ENCODE measurements at regions of chr17 and their contacts with region 1.

Region 1: GRCh38 chr17:81833160-81833920 is at the start of gene MCRIP1:
- DNase-seq: peak; percentile 91
- ATAC-seq: peak; percentile 89
- H3K4me3 ChIP-seq: peak within 1 kb of the TSS; percentile 87 to 98
- H3K27ac ChIP-seq: peak within 1 kb of the TSS; percentile 93
- H3K4me1 ChIP-seq: peaks cover 17 to 32% of the 10 kb centered on the region in 2 experiments
- H3K27me3 ChIP-seq: no peaks in the 10 kb centered on the region
- CTCF ChIP-seq: no peak
- POLR2A ChIP-seq: peak; percentile 88
- RAD21 ChIP-seq: no peak
- total RNA-seq, gene MCRIP1: 59.2 TPM

Region 2: GRCh38 chr17:81821603-81822311 is 11.6 kb before region 1 on chr17:
- CTCF ChIA-PET with region 1: interaction called, 10 read pairs
- POLR2A ChIA-PET with region 1: interaction called, 8 read pairs
- RAD21 ChIA-PET with region 1: no interaction called
- intact Hi-C with region 1: no loop called
- DNase-seq: peak; percentile 40
- ATAC-seq: peak; percentile 95
- H3K4me3 ChIP-seq: 0 out of 4 replicates have a peak overlapping the region, but pooled peaks of 1 of the 2 experiments have one; percentile 6
- H3K27ac ChIP-seq: peak overlapping the region; percentile 74
- H3K4me1 ChIP-seq: peaks cover 23 to 28% of the 10 kb centered on the region in 2 experiments
- H3K27me3 ChIP-seq: no peaks in the 10 kb centered on the region
- CTCF ChIP-seq: peak; percentile 78 to 94 (median 87); a peak in 5 of 6 replicates
- POLR2A ChIP-seq: no peak
- RAD21 ChIP-seq: peak; percentile 73

Region 3: GRCh38 chr17:81860756-81861518 is 27.6 kb after region 1 on chr17:
- CTCF ChIA-PET with region 1: no interaction called
- POLR2A ChIA-PET with region 1: interaction called, 4 read pairs
- RAD21 ChIA-PET with region 1: no interaction called
- intact Hi-C with region 1: loop called (anchors 2 kb)
- DNase-seq: peak; percentile 100
- ATAC-seq: peak; percentile 89
- H3K4me3 ChIP-seq: peak overlapping the region; percentile 95 to 97
- H3K27ac ChIP-seq: peak overlapping the region; percentile 94
- H3K4me1 ChIP-seq: peaks cover 20 to 59% of the 10 kb centered on the region in 2 experiments
- H3K27me3 ChIP-seq: no peaks in the 10 kb centered on the region
- CTCF ChIP-seq: no peak
- POLR2A ChIP-seq: peak; percentile 87
- RAD21 ChIP-seq: no peak